ENCODE measurements at regions of chr4 and their contacts with region 1.

Region 1: DNA sequence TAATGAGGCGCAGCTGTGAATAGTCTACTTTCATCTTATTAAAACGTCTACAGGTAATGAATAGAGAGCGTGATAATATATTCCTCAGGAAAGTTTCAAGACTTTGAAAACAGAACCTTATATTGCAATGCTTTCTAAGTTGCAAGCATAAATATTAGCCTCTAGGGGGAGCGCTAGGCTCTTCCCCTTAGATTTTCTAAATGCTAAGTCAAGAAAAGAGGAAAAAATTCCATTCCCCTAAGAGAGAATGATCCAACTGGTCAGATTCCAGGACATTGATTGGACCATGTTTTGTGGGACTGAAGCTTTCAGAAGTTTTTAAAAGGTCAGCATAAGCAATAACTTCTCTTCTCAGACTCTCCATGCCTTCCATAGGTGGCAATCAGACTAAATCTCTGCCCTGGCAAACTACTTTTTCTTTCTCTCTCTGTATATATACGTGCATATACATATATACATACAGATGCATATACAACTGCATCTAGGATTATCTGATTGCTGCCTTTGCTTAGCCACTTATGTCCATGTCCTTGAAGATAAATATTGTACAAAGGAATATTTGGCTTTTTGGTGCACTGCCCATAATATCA is 492.9 kb downstream of the INPP4B start:
- DNase-seq: peak; percentile 68
- H3K4me3 ChIP-seq: no peak overlapping the region
- H3K27ac ChIP-seq: no peak overlapping the region
- H3K4me1 ChIP-seq: peaks cover 21% of the 10 kb centered on the region
- H3K27me3 ChIP-seq: no peaks in the 10 kb centered on the region
- CTCF ChIP-seq: peak; percentile 60 to 66
- POLR2A ChIP-seq: no peak

Region 2: GRCh38 chr4:141307241-141307689 is 1046.0 kb before region 1 on chr4:
- CTCF ChIA-PET with region 1: interaction called, 8 read pairs
- POLR2A ChIA-PET with region 1: no interaction called
- dilution Hi-C with region 1: no loop called
- intact Hi-C with region 1: loop called (anchors 1 kb)
- DNase-seq: peak; percentile 69
- H3K4me3 ChIP-seq: no peak overlapping the region
- H3K27ac ChIP-seq: no peak overlapping the region
- H3K4me1 ChIP-seq: no peaks in the 10 kb centered on the region
- H3K27me3 ChIP-seq: no peaks in the 10 kb centered on the region
- CTCF ChIP-seq: peak; percentile 69 to 81
- POLR2A ChIP-seq: no peak

Region 3: GRCh38 chr4:142126890-142127497 is 226.2 kb before region 1 on chr4:
- CTCF ChIA-PET with region 1: interaction called, 19 read pairs
- POLR2A ChIA-PET with region 1: no interaction called
- dilution Hi-C with region 1: no loop called
- intact Hi-C with region 1: loop called (anchors 1 kb)
- DNase-seq: peak; percentile 89
- H3K4me3 ChIP-seq: no peak overlapping the region
- H3K27ac ChIP-seq: no peak overlapping the region
- H3K4me1 ChIP-seq: peaks cover 40% of the 10 kb centered on the region
- H3K27me3 ChIP-seq: no peaks in the 10 kb centered on the region
- CTCF ChIP-seq: peak; percentile 55 to 61
- POLR2A ChIP-seq: no peak

Region 4: DNA sequence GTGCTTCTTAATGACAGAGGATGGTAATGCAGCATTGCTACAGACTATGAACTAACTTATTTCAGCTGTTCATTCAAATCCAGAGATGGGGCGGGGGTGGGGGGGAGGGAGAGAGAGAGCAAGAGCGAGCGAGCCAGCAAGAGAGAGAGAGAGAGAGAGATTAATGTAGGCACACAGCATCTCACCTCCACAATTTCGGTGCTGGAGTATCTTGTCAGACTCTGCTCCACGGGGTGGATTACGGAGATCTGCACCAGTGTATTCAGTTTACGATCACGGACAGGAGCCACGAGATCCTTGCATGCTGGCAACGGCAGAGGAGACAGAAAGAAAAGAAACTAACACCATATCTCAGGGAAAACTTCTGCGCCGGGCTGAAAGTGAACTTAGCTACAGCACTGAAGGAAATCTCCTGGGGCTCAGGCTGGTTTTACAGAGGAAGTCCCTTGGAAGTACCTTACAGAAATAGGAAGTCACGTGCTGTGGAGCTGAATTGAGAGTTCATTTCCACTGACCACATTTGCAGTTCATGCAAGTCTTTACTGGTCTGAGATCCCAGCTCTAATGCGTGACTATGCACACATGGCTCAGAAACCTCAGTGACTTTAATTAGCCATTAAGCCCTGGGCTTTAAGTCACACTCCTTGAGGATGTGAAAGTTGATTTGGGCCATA is 51.9 kb after region 1 on chr4:
- CTCF ChIA-PET with region 1: interaction called, 8 read pairs
- POLR2A ChIA-PET with region 1: no interaction called
- dilution Hi-C with region 1: no loop called
- intact Hi-C with region 1: loop called (anchors 1 kb)
- DNase-seq: peak; percentile 75
- H3K4me3 ChIP-seq: peak overlapping the region; percentile 29 to 83 (median 57)
- H3K27ac ChIP-seq: peak overlapping the region; percentile 77
- H3K4me1 ChIP-seq: peaks cover 44% of the 10 kb centered on the region
- H3K27me3 ChIP-seq: no peaks in the 10 kb centered on the region
- CTCF ChIP-seq: no peak
- POLR2A ChIP-seq: no peak

Region 5: GRCh38 chr4:142719854-142720541 is 366.8 kb after region 1 on chr4:
- CTCF ChIA-PET with region 1: interaction called, 91 read pairs
- POLR2A ChIA-PET with region 1: no interaction called
- dilution Hi-C with region 1: no loop called
- intact Hi-C with region 1: loop called (anchors 1 kb)
- DNase-seq: peak; percentile 39
- H3K4me3 ChIP-seq: no peak overlapping the region
- H3K27ac ChIP-seq: no peak overlapping the region
- H3K4me1 ChIP-seq: no peaks in the 10 kb centered on the region
- H3K27me3 ChIP-seq: no peaks in the 10 kb centered on the region
- CTCF ChIP-seq: peak in 1 of 2 donors; percentile 27
- POLR2A ChIP-seq: no peak

Region 6: GRCh38 chr4:143184217-143185116 is 831.2 kb after region 1 on chr4 and contains the start of gene USP38:
- CTCF ChIA-PET with region 1: no interaction called
- POLR2A ChIA-PET with region 1: no interaction called
- dilution Hi-C with region 1: no loop called
- intact Hi-C with region 1: loop called (anchors 5 kb)
- DNase-seq: peak; percentile 90
- H3K4me3 ChIP-seq: peak within 1 kb of the TSS; percentile 64 to 84 (median 69)
- H3K27ac ChIP-seq: peak within 1 kb of the TSS; percentile 73
- H3K4me1 ChIP-seq: peaks cover 30% of the 10 kb centered on the region
- H3K27me3 ChIP-seq: no peaks in the 10 kb centered on the region
- CTCF ChIP-seq: no peak
- POLR2A ChIP-seq: peak; percentile 49
- total RNA-seq, gene USP38: 17.0 and 18.1 TPM in 2 replicates

Measured in endothelial cell of umbilical vein (primary cell).